Mammary epithelial cell (primary cell): ENCODE measurements at regions of chr2 and their contacts with region 1.

Region 1: GRCh38 chr2:174771631-174772471 is 7.6 kb upstream of the CHRNA1 start:
- DNase-seq: peak; percentile 68
- H3K4me3 ChIP-seq: no peak overlapping the region
- H3K27ac ChIP-seq: no peak overlapping the region
- H3K4me1 ChIP-seq: peaks cover 4% of the 10 kb centered on the region
- H3K27me3 ChIP-seq: no peaks in the 10 kb centered on the region
- CTCF ChIP-seq: peak; percentile 83 to 92

Region 2: DNA sequence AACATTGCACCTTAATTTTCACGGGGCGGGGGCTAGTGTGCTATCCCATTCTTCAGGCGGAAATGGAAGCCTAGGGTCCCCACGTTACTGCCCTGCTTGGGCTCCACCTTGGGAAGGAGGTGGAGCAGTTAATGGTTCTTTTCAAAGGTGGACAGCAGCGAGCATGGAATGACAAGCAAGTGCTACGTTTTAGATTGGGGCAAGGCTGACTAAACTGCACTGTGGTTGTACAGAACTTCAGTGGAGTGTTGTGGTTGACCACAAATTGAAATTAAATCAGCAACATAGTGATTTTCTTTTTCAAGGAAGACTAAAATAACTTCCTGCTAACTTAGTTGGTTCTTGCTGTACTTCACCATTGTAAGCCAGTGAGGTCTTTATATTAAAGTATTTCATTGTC is 54.6 kb before region 1 on chr2:
- CTCF ChIA-PET with region 1: no interaction called
- dilution Hi-C with region 1: loop called (anchors 5 kb)
- in situ Hi-C with region 1: no loop called
- intact Hi-C with region 1: no loop called
- DNase-seq: peak; percentile 58
- H3K4me3 ChIP-seq: no peak overlapping the region
- H3K27ac ChIP-seq: no peak overlapping the region
- H3K4me1 ChIP-seq: no peaks in the 10 kb centered on the region
- H3K27me3 ChIP-seq: no peaks in the 10 kb centered on the region
- CTCF ChIP-seq: no peak

Region 3: GRCh38 chr2:174888646-174889271 is 116.9 kb after region 1 on chr2:
- CTCF ChIA-PET with region 1: no interaction called
- dilution Hi-C with region 1: no loop called
- in situ Hi-C with region 1: no loop called
- intact Hi-C with region 1: loop called (anchors 1 kb)
- DNase-seq: no peak
- H3K4me3 ChIP-seq: no peak overlapping the region
- H3K27ac ChIP-seq: no peak overlapping the region
- H3K4me1 ChIP-seq: peaks cover 3% of the 10 kb centered on the region
- H3K27me3 ChIP-seq: no peaks in the 10 kb centered on the region
- CTCF ChIP-seq: no peak

Region 4: DNA sequence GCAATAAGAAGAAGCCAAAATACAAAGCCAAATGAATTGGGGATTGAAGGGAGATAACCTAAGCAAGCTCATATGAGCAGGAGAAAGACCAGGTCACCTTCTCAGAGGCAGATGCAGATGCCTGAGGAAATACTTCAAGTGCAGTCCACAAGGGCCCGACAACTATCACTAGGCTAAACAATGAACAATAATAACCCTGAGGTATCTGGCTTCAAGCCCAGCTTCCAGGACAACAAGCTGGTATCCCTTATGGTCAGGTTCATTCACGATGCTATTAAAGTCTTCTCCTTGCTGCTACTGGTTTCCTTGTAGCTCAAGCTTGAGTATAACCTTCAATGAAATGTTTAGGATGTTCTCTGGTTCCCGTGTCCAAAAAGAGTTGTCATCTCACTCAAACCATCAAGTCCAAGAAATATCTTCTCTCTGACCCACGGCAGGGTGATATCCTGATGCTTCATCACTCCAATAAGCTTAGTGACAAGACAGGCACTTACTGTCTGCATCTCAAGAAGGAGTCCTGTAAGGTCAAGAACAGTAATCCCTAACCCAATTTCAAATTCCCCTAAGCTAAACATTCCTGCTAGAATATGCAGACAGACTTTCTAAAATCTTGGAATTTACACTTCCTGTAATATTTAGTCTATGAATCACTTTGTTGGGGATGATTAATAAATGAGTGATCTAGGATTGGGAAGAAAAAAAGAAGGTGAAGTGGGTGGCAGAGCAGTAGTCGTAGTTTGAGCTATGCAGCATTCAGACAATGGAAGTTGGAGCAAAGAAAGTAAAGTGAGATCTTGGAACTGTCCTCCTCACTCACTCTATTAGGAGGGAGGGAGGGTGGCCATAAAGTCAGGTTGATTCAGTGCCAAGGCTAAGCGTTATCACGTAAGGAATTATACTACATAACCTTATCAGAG is 200.3 kb after region 1 on chr2:
- CTCF ChIA-PET with region 1: interaction called, 4 read pairs
- dilution Hi-C with region 1: loop called (anchors 5 kb)
- in situ Hi-C with region 1: no loop called
- intact Hi-C with region 1: no loop called
- DNase-seq: peak; percentile 84
- H3K4me3 ChIP-seq: no peak overlapping the region
- H3K27ac ChIP-seq: peak overlapping the region; percentile 72
- H3K4me1 ChIP-seq: peaks cover 25% of the 10 kb centered on the region
- H3K27me3 ChIP-seq: no peaks in the 10 kb centered on the region
- CTCF ChIP-seq: no peak

Region 5: GRCh38 chr2:174985630-174986029 is 213.8 kb after region 1 on chr2:
- CTCF ChIA-PET with region 1: interaction called, 9 read pairs
- dilution Hi-C with region 1: no loop called
- in situ Hi-C with region 1: loop called (anchors 5 kb)
- intact Hi-C with region 1: loop called (anchors 1 kb)
- DNase-seq: no peak
- H3K4me3 ChIP-seq: no peak overlapping the region
- H3K27ac ChIP-seq: no peak overlapping the region
- H3K4me1 ChIP-seq: no peaks in the 10 kb centered on the region
- H3K27me3 ChIP-seq: no peaks in the 10 kb centered on the region
- CTCF ChIP-seq: peak; percentile 38 to 55